CD4-positive, alpha-beta memory T cell (primary cell): ENCODE measurements at regions of chr2 and their contacts with region 1.

Region 1: GRCh38 chr2:95076784-95077529 is 44.7 kb downstream of the MRPS5 start:
- DNase-seq: peak; percentile 85 to 91 (median 87)
- H3K4me3 ChIP-seq: peak overlapping the region; percentile 42 to 54
- H3K4me3 Mint-ChIP-seq: peak overlapping the region; percentile 78 to 90 (median 84)
- H3K27ac ChIP-seq: peak overlapping the region; percentile 56
- H3K27ac Mint-ChIP-seq: peak overlapping the region; percentile 89 to 94 (median 90)
- H3K4me1 ChIP-seq: peaks cover 72% of the 10 kb centered on the region
- H3K4me1 Mint-ChIP-seq: peaks cover 39 to 76% (median 66%) of the 10 kb centered on the region in 4 donors
- H3K27me3 ChIP-seq: no peaks in the 10 kb centered on the region
- H3K27me3 Mint-ChIP-seq: no peaks in the 10 kb centered on the region

Region 2: DNA sequence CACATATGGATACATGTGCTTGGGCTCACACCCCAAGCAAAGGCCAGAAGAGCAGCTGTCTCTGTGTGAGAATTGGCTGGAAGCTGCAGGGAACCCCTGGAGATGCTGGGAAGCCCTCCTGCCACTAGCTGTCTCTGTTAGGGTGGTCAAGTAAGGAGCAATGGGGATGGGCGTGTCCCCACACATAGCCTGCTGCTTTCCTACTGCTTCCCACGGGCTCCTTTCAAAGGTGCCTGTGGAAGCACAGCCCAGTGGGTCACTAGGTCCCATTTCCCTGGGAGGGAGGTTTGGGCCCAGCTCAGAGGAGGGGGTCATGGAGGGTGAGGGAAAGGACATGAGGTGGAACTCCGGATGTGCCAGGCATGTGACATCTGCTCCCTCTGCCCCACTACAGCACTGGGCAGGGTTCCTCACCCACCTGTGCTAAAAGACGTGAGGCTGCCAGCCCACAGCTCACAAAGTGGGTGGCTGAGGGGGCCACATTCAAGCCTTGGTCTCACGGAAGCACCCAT is 75.8 kb before region 1 on chr2:
- CTCF ChIA-PET with region 1: no interaction called
- POLR2A ChIA-PET with region 1: no interaction called
- intact Hi-C with region 1: no loop called
- DNase-seq: no peak
- H3K4me3 ChIP-seq: no peak overlapping the region
- H3K4me3 Mint-ChIP-seq: no peak overlapping the region
- H3K27ac ChIP-seq: no peak overlapping the region
- H3K27ac Mint-ChIP-seq: no peak overlapping the region
- H3K4me1 ChIP-seq: no peaks in the 10 kb centered on the region
- H3K4me1 Mint-ChIP-seq: peaks cover 0 to 6% (median 5%) of the 10 kb centered on the region in 4 donors
- H3K27me3 ChIP-seq: peaks cover 5% of the 10 kb centered on the region
- H3K27me3 Mint-ChIP-seq: peaks cover 3 to 15% of the 10 kb centered on the region in 2 donors

Region 3: GRCh38 chr2:95013736-95014708 is 62.9 kb before region 1 on chr2:
- CTCF ChIA-PET with region 1: interaction called, 765 read pairs
- POLR2A ChIA-PET with region 1: no interaction called
- intact Hi-C with region 1: no loop called
- DNase-seq: no peak
- H3K4me3 ChIP-seq: no peak overlapping the region
- H3K4me3 Mint-ChIP-seq: no peak overlapping the region
- H3K27ac ChIP-seq: no peak overlapping the region
- H3K27ac Mint-ChIP-seq: peak overlapping the region in 1 of 7 donors; percentile 22
- H3K4me1 ChIP-seq: no peaks in the 10 kb centered on the region
- H3K4me1 Mint-ChIP-seq: peaks cover 0 to 4% (median 1%) of the 10 kb centered on the region in 4 donors
- H3K27me3 ChIP-seq: no peaks in the 10 kb centered on the region
- H3K27me3 Mint-ChIP-seq: peaks cover 0 to 2% of the 10 kb centered on the region in 2 donors

Region 4: GRCh38 chr2:95043300-95044093 is 33.5 kb before region 1 on chr2:
- CTCF ChIA-PET with region 1: interaction called, 59 read pairs
- POLR2A ChIA-PET with region 1: interaction called, 23 read pairs
- intact Hi-C with region 1: no loop called
- DNase-seq: no peak
- H3K4me3 ChIP-seq: no peak overlapping the region
- H3K4me3 Mint-ChIP-seq: no peak overlapping the region
- H3K27ac ChIP-seq: no peak overlapping the region
- H3K27ac Mint-ChIP-seq: peak overlapping the region; percentile 0 to 82 (median 67)
- H3K4me1 ChIP-seq: peaks cover 26% of the 10 kb centered on the region
- H3K4me1 Mint-ChIP-seq: peaks cover 34 to 81% (median 59%) of the 10 kb centered on the region in 4 donors
- H3K27me3 ChIP-seq: no peaks in the 10 kb centered on the region
- H3K27me3 Mint-ChIP-seq: no peaks in the 10 kb centered on the region

Region 5: DNA sequence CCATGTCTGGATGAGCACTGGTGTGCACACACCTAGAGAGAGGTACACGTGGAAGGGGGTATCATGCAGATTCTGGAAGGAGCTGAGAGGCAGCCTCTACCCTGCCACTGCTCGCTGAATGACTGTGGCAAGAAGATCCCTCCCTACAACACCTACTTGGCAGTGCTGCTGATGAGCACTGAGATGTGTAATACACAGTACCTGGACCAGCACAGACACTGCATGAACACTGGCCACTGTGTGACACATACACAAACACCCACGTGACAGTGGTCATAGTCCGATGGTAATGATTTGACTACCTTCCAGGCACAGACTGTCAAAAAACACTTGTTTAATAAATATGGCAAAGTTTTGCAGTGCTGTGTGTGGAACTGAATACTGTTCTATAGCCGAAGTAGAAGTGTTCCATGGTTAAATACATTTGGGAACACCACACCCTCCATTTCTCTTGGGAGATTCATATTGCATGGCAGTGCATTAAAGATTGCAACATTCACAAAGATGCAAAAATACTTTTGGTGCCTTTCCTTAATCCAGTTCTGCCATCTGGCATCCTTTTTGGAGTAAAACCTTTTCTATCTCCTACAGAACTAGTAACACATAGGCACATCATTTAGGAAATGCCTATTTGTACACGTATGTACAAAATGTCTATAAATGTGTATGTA is 15.1 kb after region 1 on chr2:
- CTCF ChIA-PET with region 1: interaction called, 40 read pairs
- POLR2A ChIA-PET with region 1: no interaction called
- intact Hi-C with region 1: no loop called
- DNase-seq: no peak
- H3K4me3 ChIP-seq: no peak overlapping the region
- H3K4me3 Mint-ChIP-seq: no peak overlapping the region
- H3K27ac ChIP-seq: no peak overlapping the region
- H3K27ac Mint-ChIP-seq: no peak overlapping the region
- H3K4me1 ChIP-seq: no peaks in the 10 kb centered on the region
- H3K4me1 Mint-ChIP-seq: peaks cover 20 to 36% (median 23%) of the 10 kb centered on the region in 4 donors
- H3K27me3 ChIP-seq: no peaks in the 10 kb centered on the region
- H3K27me3 Mint-ChIP-seq: no peaks in the 10 kb centered on the region

Region 6: GRCh38 chr2:95121407-95122196 is 44.6 kb after region 1 on chr2 and contains the start of gene MRPS5:
- CTCF ChIA-PET with region 1: interaction called, 264 read pairs
- POLR2A ChIA-PET with region 1: interaction called, 19 read pairs
- intact Hi-C with region 1: no loop called
- DNase-seq: peak; percentile 77 to 86 (median 78)
- H3K4me3 ChIP-seq: peak within 1 kb of the TSS; percentile 74 to 76
- H3K4me3 Mint-ChIP-seq: peak within 1 kb of the TSS; percentile 94 to 99 (median 96)
- H3K27ac ChIP-seq: peak within 1 kb of the TSS; percentile 79
- H3K27ac Mint-ChIP-seq: peak within 1 kb of the TSS; percentile 89 to 97 (median 95)
- H3K4me1 ChIP-seq: peaks cover 36% of the 10 kb centered on the region
- H3K4me1 Mint-ChIP-seq: peaks cover 36 to 55% (median 42%) of the 10 kb centered on the region in 4 donors
- H3K27me3 ChIP-seq: no peaks in the 10 kb centered on the region
- H3K27me3 Mint-ChIP-seq: peaks cover 0 to 2% of the 10 kb centered on the region in 2 donors
- total RNA-seq, gene MRPS5: 66.0 to 70.6 TPM

Region 7: DNA sequence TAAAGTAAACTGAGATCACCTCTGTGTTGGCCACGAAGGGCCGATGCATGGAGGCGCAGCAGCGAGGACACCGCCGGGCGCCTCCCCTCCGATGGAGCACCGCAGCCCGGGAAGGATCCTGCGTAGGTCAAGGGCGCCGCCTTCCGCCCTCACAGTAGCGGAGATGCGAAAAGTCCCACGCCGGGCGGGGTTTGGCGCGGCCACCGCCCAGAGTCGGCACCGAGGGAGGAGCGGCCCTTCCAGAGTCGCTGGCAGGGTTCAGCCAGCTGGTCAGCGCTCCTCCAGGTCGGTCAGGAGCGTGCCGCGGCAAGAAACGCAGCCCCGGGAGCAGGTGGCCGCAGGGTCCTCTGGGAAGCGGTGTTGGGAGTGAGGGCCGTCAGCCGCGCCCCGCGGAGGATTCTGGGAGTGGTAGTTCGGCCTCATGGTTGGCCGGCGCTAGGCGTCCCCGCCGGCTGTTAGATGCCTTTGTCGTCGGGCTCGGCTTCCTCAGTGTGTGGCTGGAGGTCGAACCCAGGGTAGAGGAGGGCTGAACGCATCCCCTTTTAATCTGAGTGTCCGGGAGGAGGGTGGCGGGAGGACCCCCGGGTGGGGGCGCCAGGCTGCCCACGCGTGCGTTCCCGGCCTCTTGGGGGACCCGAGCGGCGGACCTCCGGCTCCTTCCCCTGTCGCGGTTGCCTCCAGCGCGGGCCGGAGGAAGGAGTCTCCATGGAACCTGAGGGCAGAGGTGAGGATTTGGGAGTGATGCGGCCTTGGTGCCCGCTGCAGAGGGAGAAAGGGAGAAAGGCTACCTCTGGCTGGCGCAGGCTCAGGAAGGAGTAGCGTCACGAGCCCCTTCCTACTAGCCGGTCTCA is 130.4 kb after region 1 on chr2 and contains the start of gene ZNF892:
- CTCF ChIA-PET with region 1: interaction called, 3 read pairs
- POLR2A ChIA-PET with region 1: no interaction called
- intact Hi-C with region 1: loop called (anchors 1 kb)
- DNase-seq: peak; percentile 68 to 78 (median 69)
- H3K4me3 ChIP-seq: peak within 1 kb of the TSS; percentile 47 to 93
- H3K4me3 Mint-ChIP-seq: peak within 1 kb of the TSS; percentile 93 to 97 (median 96)
- H3K27ac ChIP-seq: peak within 1 kb of the TSS; percentile 70
- H3K27ac Mint-ChIP-seq: peak within 1 kb of the TSS; percentile 71 to 92 (median 90)
- H3K4me1 ChIP-seq: peaks cover 15% of the 10 kb centered on the region
- H3K4me1 Mint-ChIP-seq: peaks cover 11 to 19% (median 15%) of the 10 kb centered on the region in 4 donors
- H3K27me3 ChIP-seq: no peaks in the 10 kb centered on the region
- H3K27me3 Mint-ChIP-seq: no peaks in the 10 kb centered on the region
- total RNA-seq, gene ZNF892: 4.7 to 5.9 TPM